ENCODE measurements at regions of chr10 and their contacts with region 1.

Region 1: DNA sequence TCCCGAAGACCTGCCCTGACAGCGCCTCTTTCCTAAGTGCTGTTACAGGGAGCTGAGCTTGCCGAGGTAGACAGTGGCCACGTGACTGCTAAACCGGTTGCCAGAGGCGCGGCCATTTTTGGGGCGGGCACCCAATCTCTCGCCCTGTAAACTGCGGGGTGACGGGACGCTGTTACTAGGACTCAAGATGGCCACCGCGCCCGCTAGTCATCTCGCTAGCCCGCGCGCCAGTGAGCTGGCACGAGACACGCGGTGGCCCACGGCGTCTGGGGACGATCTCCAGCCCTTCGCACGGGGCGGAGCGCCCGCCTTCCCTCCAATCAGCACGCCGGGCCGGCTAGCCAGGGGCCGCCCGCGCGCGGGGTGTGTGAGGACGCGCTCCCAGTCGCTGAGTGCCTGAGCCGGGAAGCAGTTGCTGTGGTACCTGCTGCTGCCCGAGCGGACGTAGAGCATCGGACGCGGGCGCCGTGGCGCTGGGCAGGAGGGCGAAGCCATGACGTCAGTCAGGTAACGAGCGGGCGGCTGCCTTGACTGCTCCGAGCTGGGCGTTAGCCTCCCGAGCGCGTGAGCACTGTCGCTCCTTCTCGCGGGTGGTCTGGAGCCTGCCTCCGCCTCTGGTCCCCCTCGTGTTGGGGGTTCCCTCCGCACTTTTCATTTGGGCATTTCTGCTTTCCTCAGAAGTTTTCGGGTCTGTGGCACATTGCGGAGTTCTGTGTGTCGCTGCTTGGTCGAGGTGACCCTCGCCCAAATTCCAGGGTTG is 25.5 kb downstream of the ADK start:
- DNase-seq: peak; percentile 95
- H3K4me3 ChIP-seq: peak overlapping the region; percentile 32 to 80 (median 39)
- H3K27ac ChIP-seq: peak overlapping the region; percentile 41
- H3K4me1 ChIP-seq: peaks cover 15% of the 10 kb centered on the region
- H3K27me3 ChIP-seq: no peaks in the 10 kb centered on the region
- CTCF ChIP-seq: no peak
- POLR2A ChIP-seq: peak; percentile 91

Region 2: DNA sequence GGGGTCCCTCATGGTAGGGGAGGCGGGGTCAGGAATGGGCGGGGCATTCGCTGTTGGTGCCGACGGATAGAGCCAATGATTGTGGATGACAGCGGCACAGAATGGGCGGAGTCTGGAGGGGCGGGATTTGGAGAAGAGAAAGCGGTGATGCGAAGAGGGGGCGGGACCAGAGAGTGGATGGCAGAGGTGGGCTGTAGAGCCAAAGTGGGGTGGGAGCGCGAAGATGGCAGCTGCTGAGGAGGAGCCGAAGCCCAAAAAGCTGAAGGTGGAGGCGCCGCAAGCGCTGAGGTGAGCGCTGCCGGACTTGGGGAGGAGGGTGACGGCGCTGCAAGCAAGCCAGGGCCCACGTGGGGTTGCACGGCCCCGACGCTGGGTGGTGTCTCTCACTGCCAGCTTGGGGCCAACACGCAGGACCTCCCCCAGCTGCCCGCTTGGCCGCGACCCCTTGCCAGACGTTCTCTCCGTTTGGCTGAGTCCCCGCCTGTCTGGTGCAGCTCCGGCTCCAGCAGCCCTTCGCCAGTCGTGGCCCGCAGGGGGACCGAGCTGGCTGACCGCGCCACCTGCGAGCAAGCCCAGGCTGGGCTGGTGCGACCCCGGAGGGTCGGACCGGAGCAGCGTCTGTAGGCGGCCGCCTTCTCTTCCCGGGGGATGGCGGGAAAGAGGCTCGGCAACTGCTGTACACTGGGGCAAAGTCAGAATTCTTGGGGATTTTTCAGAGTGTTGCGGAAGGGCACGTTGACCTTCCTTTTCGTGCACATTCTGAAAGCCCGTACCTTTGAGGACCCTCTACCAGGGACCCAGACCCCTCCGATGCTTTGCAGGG is 25.3 kb before region 1 on chr10 and contains the start of gene ADK:
- CTCF ChIA-PET with region 1: interaction called, 6 read pairs
- POLR2A ChIA-PET with region 1: interaction called, 8 read pairs
- dilution Hi-C with region 1: no loop called
- intact Hi-C with region 1: loop called (anchors 1 kb)
- DNase-seq: peak; percentile 99
- H3K4me3 ChIP-seq: peak within 1 kb of the TSS; percentile 82 to 96 (median 87)
- H3K27ac ChIP-seq: peak within 1 kb of the TSS; percentile 93
- H3K4me1 ChIP-seq: peaks cover 13% of the 10 kb centered on the region
- H3K27me3 ChIP-seq: no peaks in the 10 kb centered on the region
- CTCF ChIP-seq: peak in 1 of 2 donors; percentile 18
- POLR2A ChIP-seq: peak; percentile 82
- total RNA-seq, gene ADK: 38.1 and 46.5 TPM in 2 replicates

Region 3: GRCh38 chr10:74249865-74250264 is 73.3 kb after region 1 on chr10:
- CTCF ChIA-PET with region 1: no interaction called
- POLR2A ChIA-PET with region 1: no interaction called
- dilution Hi-C with region 1: no loop called
- intact Hi-C with region 1: no loop called
- DNase-seq: no peak
- H3K4me3 ChIP-seq: no peak overlapping the region
- H3K27ac ChIP-seq: no peak overlapping the region
- H3K4me1 ChIP-seq: no peaks in the 10 kb centered on the region
- H3K27me3 ChIP-seq: no peaks in the 10 kb centered on the region
- CTCF ChIP-seq: no peak
- POLR2A ChIP-seq: no peak

Measured in endothelial cell of umbilical vein (primary cell).